CD8-positive, alpha-beta memory T cell (primary cell): ENCODE measurements at regions of chr14 and their contacts with region 1.

Region 1: GRCh38 chr14:50785457-50786063 is 45.4 kb downstream of the NIN start:
- DNase-seq: peak in 1 of 5 donors; percentile 35
- H3K4me3 ChIP-seq: peak overlapping the region; percentile 10
- H3K4me3 Mint-ChIP-seq: peak overlapping the region; percentile 59 to 79 (median 75)
- H3K27ac ChIP-seq: no peak overlapping the region
- H3K27ac Mint-ChIP-seq: peak overlapping the region; percentile 84 to 98 (median 92)
- H3K4me1 ChIP-seq: peaks cover 66% of the 10 kb centered on the region
- H3K4me1 Mint-ChIP-seq: peaks cover 88 to 100% (median 93%) of the 10 kb centered on the region in 3 donors
- H3K27me3 ChIP-seq: no peaks in the 10 kb centered on the region
- H3K27me3 Mint-ChIP-seq: no peaks in the 10 kb centered on the region

Region 2: GRCh38 chr14:50762001-50762930 is 23.3 kb before region 1 on chr14:
- CTCF ChIA-PET with region 1: no interaction called
- POLR2A ChIA-PET with region 1: no interaction called
- DNase-seq: no peak
- H3K4me3 ChIP-seq: no peak overlapping the region
- H3K4me3 Mint-ChIP-seq: no peak overlapping the region
- H3K27ac ChIP-seq: no peak overlapping the region
- H3K27ac Mint-ChIP-seq: peak overlapping the region in 5 of 8 donors; percentile 7 to 78 (median 24)
- H3K4me1 ChIP-seq: no peaks in the 10 kb centered on the region
- H3K4me1 Mint-ChIP-seq: no peaks in the 10 kb centered on the region
- H3K27me3 ChIP-seq: no peaks in the 10 kb centered on the region
- H3K27me3 Mint-ChIP-seq: no peaks in the 10 kb centered on the region

Region 3: DNA sequence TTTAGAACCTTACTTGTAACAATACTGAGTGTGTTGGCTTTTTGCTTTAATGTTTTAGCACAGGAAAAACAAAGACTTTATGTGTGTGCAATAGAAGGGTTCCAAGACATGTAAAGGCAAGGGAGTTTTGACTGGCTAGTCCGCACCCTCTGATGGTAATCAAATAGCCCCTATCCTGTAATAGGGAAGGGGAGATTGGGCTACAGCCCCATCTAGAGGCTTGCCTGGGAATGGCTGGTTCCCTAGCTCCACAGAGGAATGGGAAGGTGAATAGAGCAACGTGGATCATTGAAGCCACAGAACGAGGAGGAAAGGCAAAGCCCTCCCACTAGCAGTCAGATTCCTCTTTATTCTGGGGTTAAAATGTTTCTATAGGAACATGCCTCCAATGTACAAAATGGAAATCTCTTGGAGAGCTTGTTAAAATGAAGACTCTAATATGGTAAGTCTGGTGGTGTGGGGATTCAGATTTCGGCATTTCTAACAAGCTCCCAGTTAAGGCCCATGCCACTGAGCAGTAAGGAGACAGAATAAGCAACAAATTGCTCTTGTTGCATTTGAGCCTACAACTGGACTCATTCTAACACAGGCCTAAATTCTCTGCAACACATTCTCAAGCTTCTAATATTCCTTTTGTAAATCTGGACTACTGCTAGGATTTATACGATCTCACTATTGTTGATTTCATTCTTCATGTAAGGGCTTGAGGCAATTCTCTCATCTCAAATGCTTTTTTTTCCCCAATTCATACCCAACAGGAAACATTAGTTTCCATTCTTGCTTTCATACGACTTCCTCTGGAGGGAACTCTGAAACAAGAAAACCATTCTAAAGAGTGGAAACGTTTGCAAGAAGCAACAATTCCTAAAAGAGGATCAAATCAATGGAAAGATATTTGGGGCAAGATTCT is 11.7 kb before region 1 on chr14:
- CTCF ChIA-PET with region 1: interaction called, 86 read pairs
- POLR2A ChIA-PET with region 1: interaction called, 3 read pairs
- DNase-seq: no peak
- H3K4me3 ChIP-seq: no peak overlapping the region
- H3K4me3 Mint-ChIP-seq: no peak overlapping the region
- H3K27ac ChIP-seq: no peak overlapping the region
- H3K27ac Mint-ChIP-seq: peak overlapping the region in 7 of 8 donors; percentile 33 to 82 (median 70)
- H3K4me1 ChIP-seq: peaks cover 21% of the 10 kb centered on the region
- H3K4me1 Mint-ChIP-seq: peaks cover 17 to 38% (median 27%) of the 10 kb centered on the region in 3 donors
- H3K27me3 ChIP-seq: no peaks in the 10 kb centered on the region
- H3K27me3 Mint-ChIP-seq: no peaks in the 10 kb centered on the region

Region 4: DNA sequence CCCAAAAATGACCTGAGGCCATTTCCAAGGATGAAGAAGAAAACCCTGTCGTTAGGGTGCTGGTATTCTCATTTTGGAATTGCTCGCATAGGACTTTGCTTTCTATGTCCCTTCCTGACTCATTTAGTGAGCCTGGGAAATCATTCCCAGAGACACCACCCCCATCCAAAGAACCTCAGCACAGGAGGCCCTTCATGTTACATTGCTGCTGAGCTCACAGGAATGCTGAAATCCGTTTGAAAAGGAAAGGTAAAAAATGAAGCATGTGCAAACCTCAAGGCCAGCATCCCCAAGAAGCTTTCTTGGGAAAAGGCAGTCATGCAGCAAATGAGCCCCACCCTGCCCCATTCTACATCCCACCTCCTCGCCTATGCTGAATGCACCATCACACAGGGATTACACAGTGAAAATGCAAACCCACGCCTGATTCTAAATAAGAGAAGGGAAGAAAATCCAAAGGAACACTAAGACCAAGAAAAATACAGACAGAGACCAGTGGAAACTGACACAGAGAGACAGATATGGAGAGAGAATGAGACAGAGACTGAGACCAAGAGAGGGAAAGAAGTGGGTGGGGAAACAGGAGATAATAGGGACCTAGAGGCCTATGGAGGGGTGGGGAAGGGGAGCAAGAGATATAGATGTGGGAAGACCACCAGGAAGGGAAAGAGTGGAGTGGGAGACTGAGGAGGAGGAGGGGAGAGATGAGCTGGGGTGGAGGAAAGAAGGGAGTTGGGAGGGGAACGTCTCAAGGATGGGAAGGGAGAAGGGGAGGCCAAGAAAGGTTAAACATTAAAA is 11.9 kb after region 1 on chr14:
- CTCF ChIA-PET with region 1: interaction called, 10 read pairs
- POLR2A ChIA-PET with region 1: interaction called, 5 read pairs
- DNase-seq: no peak
- H3K4me3 ChIP-seq: no peak overlapping the region
- H3K4me3 Mint-ChIP-seq: no peak overlapping the region
- H3K27ac ChIP-seq: no peak overlapping the region
- H3K27ac Mint-ChIP-seq: peak overlapping the region in 7 of 8 donors; percentile 1 to 90 (median 59)
- H3K4me1 ChIP-seq: peaks cover 27% of the 10 kb centered on the region
- H3K4me1 Mint-ChIP-seq: peaks cover 50 to 81% (median 60%) of the 10 kb centered on the region in 3 donors
- H3K27me3 ChIP-seq: no peaks in the 10 kb centered on the region
- H3K27me3 Mint-ChIP-seq: peaks cover 0 to 2% of the 10 kb centered on the region in 2 donors

Region 5: GRCh38 chr14:50823051-50823761 is 37.6 kb after region 1 on chr14:
- CTCF ChIA-PET with region 1: interaction called, 34 read pairs
- POLR2A ChIA-PET with region 1: interaction called, 13 read pairs
- DNase-seq: peak in 1 of 5 donors; percentile 29
- H3K4me3 ChIP-seq: peak overlapping the region; percentile 26
- H3K4me3 Mint-ChIP-seq: peak overlapping the region; percentile 44 to 87 (median 78)
- H3K27ac ChIP-seq: peak overlapping the region; percentile 43
- H3K27ac Mint-ChIP-seq: peak overlapping the region; percentile 87 to 98 (median 95)
- H3K4me1 ChIP-seq: peaks cover 96% of the 10 kb centered on the region
- H3K4me1 Mint-ChIP-seq: peaks cover 86 to 96% (median 96%) of the 10 kb centered on the region in 3 donors
- H3K27me3 ChIP-seq: no peaks in the 10 kb centered on the region
- H3K27me3 Mint-ChIP-seq: no peaks in the 10 kb centered on the region

Region 6: GRCh38 chr14:50830932-50831725 is 45.6 kb after region 1 on chr14 and contains the start of gene NIN:
- CTCF ChIA-PET with region 1: interaction called, 34 read pairs
- POLR2A ChIA-PET with region 1: interaction called, 13 read pairs
- DNase-seq: peak; percentile 65 to 82 (median 72)
- H3K4me3 ChIP-seq: peak within 1 kb of the TSS; percentile 69
- H3K4me3 Mint-ChIP-seq: peak within 1 kb of the TSS; percentile 94 to 99 (median 97)
- H3K27ac ChIP-seq: peak within 1 kb of the TSS; percentile 76
- H3K27ac Mint-ChIP-seq: peak within 1 kb of the TSS; percentile 92 to 99 (median 97)
- H3K4me1 ChIP-seq: peaks cover 58% of the 10 kb centered on the region
- H3K4me1 Mint-ChIP-seq: peaks cover 49 to 70% (median 65%) of the 10 kb centered on the region in 3 donors
- H3K27me3 ChIP-seq: no peaks in the 10 kb centered on the region
- H3K27me3 Mint-ChIP-seq: no peaks in the 10 kb centered on the region
- total RNA-seq, gene NIN: 73.8 to 77.8 TPM